ENCODE measurements at regions of chr11 and their contacts with region 1.

Region 1: GRCh38 chr11:46686886-46687795 is 13.3 kb downstream of the ARHGAP1 start:
- DNase-seq: no peak
- H3K4me3 Mint-ChIP-seq: no peak overlapping the region
- H3K27ac Mint-ChIP-seq: peak overlapping the region; percentile 26
- H3K4me1 Mint-ChIP-seq: peaks cover 6% of the 10 kb centered on the region
- H3K27me3 Mint-ChIP-seq: no peaks in the 10 kb centered on the region

Region 2: DNA sequence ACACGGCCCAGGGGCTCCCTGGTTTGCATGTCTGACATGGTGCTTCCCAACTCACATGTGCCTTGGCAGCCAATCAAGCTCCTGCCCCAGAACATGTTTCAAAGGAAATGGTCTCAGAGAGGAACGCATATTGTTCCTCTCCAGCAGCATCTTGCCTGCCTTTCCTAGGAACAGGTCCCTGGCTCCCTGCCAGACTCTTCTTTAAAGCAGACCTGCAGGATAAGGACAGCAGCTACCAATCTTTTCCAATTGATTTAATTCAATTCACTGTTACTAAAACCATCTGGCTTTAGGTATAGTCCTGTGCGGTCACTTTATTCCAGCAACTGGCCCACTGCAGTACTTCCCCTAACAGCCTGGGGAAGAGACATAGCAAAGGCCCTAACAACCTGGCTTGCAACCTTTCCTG is 173.2 kb before region 1 on chr11:
- CTCF ChIA-PET with region 1: no interaction called
- POLR2A ChIA-PET with region 1: no interaction called
- DNase-seq: no peak
- H3K4me3 Mint-ChIP-seq: no peak overlapping the region
- H3K27ac Mint-ChIP-seq: no peak overlapping the region
- H3K4me1 Mint-ChIP-seq: peaks cover 13% of the 10 kb centered on the region
- H3K27me3 Mint-ChIP-seq: no peaks in the 10 kb centered on the region

Region 3: DNA sequence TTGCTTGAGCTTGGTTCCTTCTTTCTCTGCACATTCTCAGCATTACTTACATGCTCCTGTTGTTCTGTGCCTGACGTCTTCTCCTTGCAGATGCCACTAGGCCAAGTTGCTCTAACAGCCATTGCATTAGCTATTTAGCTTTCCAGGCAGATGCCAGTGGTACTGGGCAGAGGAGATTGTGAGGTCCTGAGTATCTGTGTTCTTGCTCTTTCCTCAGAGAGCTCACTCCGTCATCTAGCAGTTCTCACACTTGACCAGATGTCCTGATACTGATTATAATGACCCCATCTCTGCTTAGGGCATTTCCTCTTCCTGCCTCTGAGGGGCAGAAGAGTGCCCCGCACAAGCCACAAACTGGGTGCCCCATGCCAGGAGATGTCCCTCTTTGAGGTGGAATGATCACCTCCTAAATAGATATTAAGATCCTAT is 17.4 kb before region 1 on chr11:
- CTCF ChIA-PET with region 1: interaction called, 4 read pairs
- POLR2A ChIA-PET with region 1: interaction called, 11 read pairs
- DNase-seq: no peak
- H3K4me3 Mint-ChIP-seq: no peak overlapping the region
- H3K27ac Mint-ChIP-seq: peak overlapping the region; percentile 98
- H3K4me1 Mint-ChIP-seq: peaks cover 40% of the 10 kb centered on the region
- H3K27me3 Mint-ChIP-seq: no peaks in the 10 kb centered on the region

Region 4: GRCh38 chr11:47004595-47005033 is 317.5 kb after region 1 on chr11:
- CTCF ChIA-PET with region 1: no interaction called
- POLR2A ChIA-PET with region 1: no interaction called
- DNase-seq: no peak
- H3K4me3 Mint-ChIP-seq: no peak overlapping the region
- H3K27ac Mint-ChIP-seq: no peak overlapping the region
- H3K4me1 Mint-ChIP-seq: peaks cover 5% of the 10 kb centered on the region
- H3K27me3 Mint-ChIP-seq: no peaks in the 10 kb centered on the region

Measured in activated CD4-positive, alpha-beta memory T cell treated with anti-CD3 and anti-CD28 coated beads, Interleukin-2, amount 10 ng/mL, durations not matched to agents 7 days and 5 days (primary cell).